ENCODE measurements at regions of chr4 and their contacts with region 1.

Region 1: DNA sequence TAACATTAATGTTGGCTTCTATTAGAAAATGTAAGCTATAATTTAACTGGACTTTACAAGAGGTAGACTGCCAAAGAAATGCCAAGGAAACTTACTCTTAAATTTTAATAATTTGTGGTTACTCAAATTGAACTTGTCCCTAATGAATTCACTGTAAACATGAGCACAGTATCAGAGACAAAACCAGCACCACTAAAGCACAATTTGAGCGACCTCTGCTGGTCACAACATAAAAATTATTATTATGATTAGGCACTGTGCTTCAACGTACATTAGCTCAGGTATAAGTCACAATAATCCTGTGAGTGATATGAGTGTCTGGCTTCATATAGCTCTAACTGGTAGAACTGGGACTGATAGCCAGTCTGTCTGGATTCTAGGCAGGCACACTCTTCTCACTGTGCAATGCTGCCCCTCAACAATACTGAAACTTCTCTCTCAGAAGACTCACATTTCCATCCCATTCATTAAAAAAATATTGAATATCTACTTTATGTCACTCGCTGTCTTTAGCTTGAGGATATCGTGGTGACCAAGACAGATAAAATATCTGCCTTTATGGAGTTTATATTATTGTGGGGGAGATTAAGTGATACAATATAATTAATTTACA is 8.0 kb downstream of the NUDT6 start:
- DNase-seq: no peak
- ATAC-seq: peak; percentile 60
- H3K4me3 ChIP-seq: no peak overlapping the region
- H3K4me1 ChIP-seq: no peaks in the 10 kb centered on the region
- CTCF ChIP-seq: no peak

Region 2: DNA sequence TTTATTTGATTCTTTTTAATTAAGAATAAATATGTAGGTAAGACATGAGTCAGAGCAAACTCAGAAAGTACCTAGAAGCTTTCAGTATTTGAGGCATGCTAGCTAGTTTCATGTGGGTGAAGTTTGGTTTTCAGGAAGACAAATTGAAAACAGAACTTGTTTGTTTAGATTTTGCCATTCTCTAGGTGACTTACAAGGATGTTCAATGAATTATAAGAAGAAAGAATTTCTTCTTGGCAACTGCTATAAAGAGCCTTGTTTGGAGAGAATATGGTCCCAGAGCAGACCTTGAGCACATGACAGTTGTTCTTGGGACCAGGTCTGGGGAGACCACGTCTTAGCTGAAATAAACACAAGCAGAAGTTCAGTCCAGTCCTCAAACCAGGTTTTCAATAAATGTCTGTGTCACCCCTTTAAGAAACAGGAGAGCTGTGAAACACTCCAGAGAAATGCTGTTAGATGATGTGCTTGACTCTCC is 255.5 kb before region 1 on chr4:
- intact Hi-C with region 1: no loop called
- DNase-seq: no peak
- ATAC-seq: no peak
- H3K4me3 ChIP-seq: no peak overlapping the region
- H3K4me1 ChIP-seq: no peaks in the 10 kb centered on the region
- CTCF ChIP-seq: no peak

Region 3: GRCh38 chr4:122764821-122765215 is 149.6 kb before region 1 on chr4:
- intact Hi-C with region 1: loop called in 1 of 2 experiments (anchors 10 kb)
- DNase-seq: no peak
- ATAC-seq: no peak
- H3K4me3 ChIP-seq: no peak overlapping the region
- H3K4me1 ChIP-seq: no peaks in the 10 kb centered on the region
- CTCF ChIP-seq: no peak

Region 4: DNA sequence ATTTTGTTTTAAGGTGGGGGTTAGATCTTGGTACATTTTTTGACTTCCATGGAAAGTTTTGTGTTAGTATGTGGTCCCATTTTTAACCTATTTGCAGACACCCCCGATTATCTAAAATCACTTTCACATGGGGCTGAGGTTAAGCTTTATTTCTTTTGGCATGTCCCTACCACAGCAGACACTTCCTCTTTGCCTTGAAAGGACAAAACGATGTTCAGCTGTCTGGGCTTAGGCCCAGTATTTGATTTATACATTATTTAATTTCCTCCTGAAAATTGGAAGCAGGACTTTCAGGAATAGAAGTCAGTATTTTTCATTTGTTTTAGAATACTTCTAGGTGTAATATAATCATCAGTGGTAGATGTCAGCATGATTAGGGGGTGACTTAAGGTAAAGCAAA is 369.8 kb after region 1 on chr4:
- intact Hi-C with region 1: no loop called
- DNase-seq: no peak
- ATAC-seq: no peak
- H3K4me3 ChIP-seq: no peak overlapping the region
- H3K4me1 ChIP-seq: no peaks in the 10 kb centered on the region
- CTCF ChIP-seq: no peak

Region 5: GRCh38 chr4:123671633-123672404 is 757.4 kb after region 1 on chr4:
- intact Hi-C with region 1: no loop called
- DNase-seq: no peak
- ATAC-seq: no peak
- H3K4me3 ChIP-seq: no peak overlapping the region
- H3K4me1 ChIP-seq: peaks cover 6% of the 10 kb centered on the region
- CTCF ChIP-seq: no peak

Measured in mucosa of descending colon (tissue), 3 donors.